ENCODE measurements at regions of chr12 and their contacts with region 1.

Region 1: DNA sequence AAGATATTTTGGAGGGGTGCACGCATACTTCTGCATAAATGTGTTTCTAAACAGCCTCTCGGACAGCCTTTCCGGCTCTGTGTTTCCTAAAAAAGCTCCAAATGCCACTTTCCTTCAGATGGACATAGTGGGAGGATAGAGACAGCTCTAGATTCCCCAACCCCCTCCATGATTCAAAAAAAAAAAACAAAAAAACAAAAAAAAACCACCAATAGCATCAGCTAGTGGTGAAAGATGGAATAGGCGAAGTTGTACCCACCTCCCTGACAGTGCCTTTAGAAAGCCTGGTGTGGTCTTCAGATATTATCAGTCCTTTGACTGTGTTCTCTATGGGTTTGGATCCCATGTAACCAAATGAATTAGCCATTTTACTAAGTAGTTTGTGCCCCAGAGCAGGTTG is 94.1 kb downstream of the PHETA1 start:
- DNase-seq: peak in 1 of 2 experiments; percentile 63
- ATAC-seq: peak; percentile 55 to 76
- H3K4me3 ChIP-seq: no peak overlapping the region
- H3K27ac ChIP-seq: no peak overlapping the region
- H3K4me1 ChIP-seq: peaks cover 16% of the 10 kb centered on the region; the same call in 1 of the 3 replicates
- CTCF ChIP-seq: peak; percentile 41
- EP300 ChIP-seq: no peak
- POLR2A ChIP-seq: no peak
- RAD21 ChIP-seq: peak in 1 of 2 experiments; percentile 45; a peak in 1 of 5 replicates

Region 2: GRCh38 chr12:111261911-111262676 is 12.7 kb before region 1 on chr12:
- CTCF ChIA-PET with region 1: interaction called, 60 read pairs
- POLR2A ChIA-PET with region 1: no interaction called
- DNase-seq: no peak
- ATAC-seq: no peak
- H3K4me3 ChIP-seq: no peak overlapping the region
- H3K27ac ChIP-seq: no peak overlapping the region
- H3K4me1 ChIP-seq: no peaks in the 10 kb centered on the region
- CTCF ChIP-seq: no peak
- EP300 ChIP-seq: no peak
- POLR2A ChIP-seq: no peak
- RAD21 ChIP-seq: no peak

Measured in A549 (cell line).